Gastrocnemius medialis (tissue), 4 donors: ENCODE measurements at regions of chr1 and their contacts with region 1.

Region 1: GRCh38 chr1:184449916-184450315 is 63.1 kb downstream of the C1orf21 start:
- DNase-seq: no peak
- ATAC-seq: peak; percentile 18 to 56
- H3K4me3 ChIP-seq: no peak overlapping the region
- H3K27ac ChIP-seq: peak overlapping the region in 3 of 4 donors; percentile 0 to 56 (median 31)
- H3K4me1 ChIP-seq: peaks cover 62 to 67% of the 10 kb centered on the region in 2 donors
- H3K27me3 ChIP-seq: no peaks in the 10 kb centered on the region
- CTCF ChIP-seq: no peak
- POLR2A ChIP-seq: no peak

Region 2: GRCh38 chr1:184352776-184353175 is 97.1 kb before region 1 on chr1:
- in situ Hi-C with region 1: no loop called
- intact Hi-C with region 1: no loop called
- DNase-seq: no peak
- ATAC-seq: no peak
- H3K4me3 ChIP-seq: no peak overlapping the region
- H3K27ac ChIP-seq: no peak overlapping the region
- H3K4me1 ChIP-seq: peaks cover 14 to 22% of the 10 kb centered on the region in 2 donors
- H3K27me3 ChIP-seq: no peaks in the 10 kb centered on the region
- CTCF ChIP-seq: no peak
- POLR2A ChIP-seq: no peak

Region 3: GRCh38 chr1:184407816-184408537 is 41.9 kb before region 1 on chr1:
- in situ Hi-C with region 1: no loop called
- intact Hi-C with region 1: loop called (anchors 5 kb)
- DNase-seq: no peak
- ATAC-seq: no peak
- H3K4me3 ChIP-seq: peak overlapping the region in 1 of 4 donors; percentile 15
- H3K27ac ChIP-seq: peak overlapping the region; percentile 28 to 64 (median 48)
- H3K4me1 ChIP-seq: peaks cover 78 to 90% of the 10 kb centered on the region in 2 donors
- H3K27me3 ChIP-seq: no peaks in the 10 kb centered on the region
- CTCF ChIP-seq: no peak
- POLR2A ChIP-seq: no peak

Region 4: GRCh38 chr1:184465489-184466146 is 15.7 kb after region 1 on chr1:
- in situ Hi-C with region 1: no loop called
- intact Hi-C with region 1: no loop called
- DNase-seq: peak in 1 of 2 donors; percentile 37
- ATAC-seq: peak in 1 of 2 donors; percentile 56
- H3K4me3 ChIP-seq: no peak overlapping the region
- H3K27ac ChIP-seq: peak overlapping the region in 3 of 4 donors; percentile 56 to 76 (median 75)
- H3K4me1 ChIP-seq: peaks cover 61 to 82% of the 10 kb centered on the region in 2 donors
- H3K27me3 ChIP-seq: no peaks in the 10 kb centered on the region
- CTCF ChIP-seq: peak in 3 of 5 experiments; percentile 24 to 47 (median 26)
- POLR2A ChIP-seq: no peak

Region 5: GRCh38 chr1:184513966-184514365 is 64.0 kb after region 1 on chr1:
- in situ Hi-C with region 1: no loop called
- intact Hi-C with region 1: no loop called
- DNase-seq: peak; percentile 63 to 82
- ATAC-seq: peak; percentile 82 to 85
- H3K4me3 ChIP-seq: no peak overlapping the region
- H3K27ac ChIP-seq: peak overlapping the region; percentile 75 to 96 (median 90)
- H3K4me1 ChIP-seq: peaks cover 58 to 72% of the 10 kb centered on the region in 2 donors
- H3K27me3 ChIP-seq: no peaks in the 10 kb centered on the region
- CTCF ChIP-seq: no peak
- POLR2A ChIP-seq: no peak